Kidney (tissue), 22 donors: ENCODE measurements at regions of chr19 and their contacts with region 1.

Region 1: DNA sequence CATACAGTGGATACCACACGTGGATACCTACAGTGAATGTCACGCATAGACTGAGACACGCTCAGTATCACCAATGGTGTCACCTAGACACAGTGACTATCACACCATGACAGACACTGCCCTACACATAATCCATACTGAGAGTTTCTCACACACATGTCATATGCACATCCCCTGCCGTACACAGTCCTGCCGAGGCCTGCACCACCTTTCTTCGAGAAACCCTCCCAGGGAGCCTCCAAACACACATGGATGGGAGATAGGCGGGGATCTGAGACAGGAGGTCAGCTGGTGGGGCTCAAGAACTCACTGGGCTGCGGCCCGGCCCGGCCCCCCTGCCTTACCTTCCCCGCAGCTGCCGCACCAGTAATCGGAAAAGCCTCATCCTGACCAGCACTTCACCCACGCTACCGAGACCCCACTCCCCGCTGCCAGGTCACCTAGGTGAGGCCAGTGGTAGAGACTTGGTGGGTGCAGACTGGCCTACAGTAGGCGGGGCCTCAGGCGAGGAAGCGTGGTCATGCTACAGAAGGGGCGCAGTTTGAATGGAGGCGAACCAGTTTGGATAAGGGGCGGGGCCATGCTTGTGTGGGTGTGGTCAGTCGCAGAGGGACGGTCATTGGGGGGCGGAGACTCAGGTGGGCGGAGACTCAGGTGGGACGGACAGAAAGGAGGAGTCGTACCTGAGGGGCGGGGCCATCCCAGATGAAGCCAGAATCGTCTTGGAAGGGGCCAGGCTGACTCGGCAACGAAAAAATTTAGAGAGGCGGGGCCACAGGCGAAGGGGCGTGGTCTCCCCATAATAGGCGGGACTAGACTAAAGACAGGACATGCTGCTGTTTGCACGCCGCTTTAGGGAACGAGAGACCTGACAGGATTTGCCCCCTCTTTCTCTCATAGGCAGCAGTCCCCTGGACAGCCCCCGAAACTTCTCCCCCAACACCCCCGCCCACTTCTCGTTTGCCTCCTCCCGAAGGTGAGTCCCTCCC is 2.1 kb downstream of the MAST1 start:
- DNase-seq: peak; percentile 77 to 94 (median 85)
- H3K4me3 ChIP-seq: no peak overlapping the region
- H3K27ac ChIP-seq: no peak overlapping the region
- H3K4me1 ChIP-seq: peaks cover 0 to 2% (median 0%) of the 10 kb centered on the region in 3 donors
- H3K27me3 ChIP-seq: peaks cover 34% of the 10 kb centered on the region
- CTCF ChIP-seq: no peak

Region 2: GRCh38 chr19:12763100-12763499 is 77.3 kb before region 1 on chr19:
- intact Hi-C with region 1: loop called (anchors 5 kb)
- DNase-seq: peak in 1 of 5 donors; percentile 66
- H3K4me3 ChIP-seq: no peak overlapping the region
- H3K27ac ChIP-seq: no peak overlapping the region
- H3K4me1 ChIP-seq: no peaks in the 10 kb centered on the region
- H3K27me3 ChIP-seq: no peaks in the 10 kb centered on the region
- CTCF ChIP-seq: no peak

Region 3: DNA sequence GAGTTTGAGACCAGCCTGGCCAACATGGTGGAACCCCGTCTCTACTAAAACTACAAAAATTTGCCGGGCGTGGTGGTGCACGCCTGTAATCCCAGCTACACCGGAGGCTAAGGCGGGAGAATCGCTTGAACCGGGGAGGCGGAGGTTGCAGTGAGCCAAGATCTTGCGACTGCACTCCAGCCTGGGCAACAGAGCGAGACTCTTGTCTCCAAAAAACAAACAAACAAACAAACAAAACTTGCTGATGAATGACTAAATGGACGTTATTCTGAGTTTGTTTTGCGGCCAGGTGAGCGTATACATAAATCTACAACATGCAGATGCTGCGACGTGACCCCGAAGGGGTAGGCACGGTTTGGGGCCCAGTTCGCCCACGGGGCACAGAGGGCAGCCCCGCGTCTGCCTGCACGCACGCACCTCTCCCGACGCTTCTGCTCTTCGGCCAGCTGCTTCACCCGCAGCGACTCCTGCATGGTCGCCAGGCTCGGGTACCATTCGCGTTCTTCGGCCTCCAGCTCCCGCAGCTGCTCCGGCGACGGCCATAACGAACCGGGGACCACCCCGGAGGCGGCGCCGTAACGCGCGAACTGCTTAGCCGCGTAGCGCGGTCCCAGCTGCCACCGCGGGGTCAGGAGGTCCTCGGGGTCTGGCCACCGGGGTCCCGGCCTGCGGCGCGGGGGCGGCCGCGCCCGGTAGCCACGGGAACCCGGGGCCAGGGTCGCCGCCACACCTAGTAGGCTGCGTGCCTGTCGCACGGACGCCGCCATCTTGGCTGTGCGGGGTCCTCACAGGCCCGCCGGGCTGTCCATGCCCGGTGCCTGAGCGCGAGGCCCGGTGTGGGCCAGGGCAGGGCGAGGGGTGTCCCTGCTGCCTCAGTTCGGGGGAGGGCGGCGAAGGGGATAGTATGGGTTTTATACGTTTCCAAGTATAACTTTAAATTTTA is 116.3 kb after region 1 on chr19 and contains the start of gene GADD45GIP1:
- intact Hi-C with region 1: no loop called
- DNase-seq: peak; percentile 84 to 93 (median 89)
- H3K4me3 ChIP-seq: peak within 1 kb of the TSS; percentile 77 to 93 (median 79)
- H3K27ac ChIP-seq: peak within 1 kb of the TSS; percentile 43 to 84
- H3K4me1 ChIP-seq: peaks cover 0 to 10% (median 0%) of the 10 kb centered on the region in 3 donors
- H3K27me3 ChIP-seq: no peaks in the 10 kb centered on the region
- CTCF ChIP-seq: no peak
- total RNA-seq, gene GADD45GIP1: 18.4 TPM